ENCODE measurements at regions of chr1 and their contacts with region 1.

Region 1: DNA sequence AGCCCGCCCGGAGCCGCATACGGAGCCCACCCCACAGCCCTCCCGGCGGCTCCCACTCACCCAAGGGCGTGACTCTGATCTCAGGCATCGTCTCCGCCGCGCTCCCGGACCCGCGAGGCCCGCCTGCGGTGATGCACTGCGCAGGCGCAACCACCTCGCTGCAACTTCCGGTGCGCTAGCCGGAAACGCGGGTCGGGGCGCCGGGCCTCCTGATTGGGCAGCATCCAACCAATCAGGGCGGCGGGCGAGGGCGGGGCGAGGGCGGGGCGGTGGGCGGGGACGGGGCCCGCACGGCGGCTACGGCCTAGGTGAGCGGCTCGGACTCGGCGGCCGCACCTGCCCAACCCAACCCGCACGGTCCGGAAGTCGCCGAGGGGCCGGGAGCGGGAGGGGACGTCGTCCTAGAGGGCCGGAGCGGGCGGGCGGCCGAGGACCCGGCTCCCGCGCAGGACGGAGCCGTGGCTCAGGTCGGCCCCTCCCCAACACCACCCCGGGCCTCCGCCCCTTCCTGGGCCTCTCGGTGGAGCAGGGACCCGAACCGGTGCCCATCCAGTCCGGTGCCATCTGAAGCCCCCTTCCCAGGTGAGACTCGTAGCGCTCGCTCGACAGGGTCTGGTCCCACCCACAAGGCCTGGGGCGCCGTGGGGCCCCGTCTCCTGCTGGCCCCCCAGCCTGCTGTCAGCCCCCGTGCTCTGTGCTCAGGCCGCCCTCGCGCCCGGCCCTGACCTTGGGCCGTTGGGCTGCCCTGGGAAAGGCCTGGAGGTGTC is at the starts of genes CPTP and INTS11:
- DNase-seq: peak; percentile 90 to 95
- H3K4me3 ChIP-seq: peak within 1 kb of the TSS; percentile 71 to 98 (median 79)
- H3K27ac ChIP-seq: peak within 1 kb of the TSS; percentile 73 to 79 (median 76)
- H3K4me1 ChIP-seq: peaks cover 12 to 35% of the 10 kb centered on the region in 2 donors
- H3K27me3 ChIP-seq: no peaks in the 10 kb centered on the region
- CTCF ChIP-seq: no peak
- POLR2A ChIP-seq: peak in 1 of 2 donors; percentile 70
- total RNA-seq, gene CPTP: 16.7 to 37.3 (median 24.3) TPM
- total RNA-seq, gene INTS11: 68.9 to 116 (median 94.7) TPM

Region 2: DNA sequence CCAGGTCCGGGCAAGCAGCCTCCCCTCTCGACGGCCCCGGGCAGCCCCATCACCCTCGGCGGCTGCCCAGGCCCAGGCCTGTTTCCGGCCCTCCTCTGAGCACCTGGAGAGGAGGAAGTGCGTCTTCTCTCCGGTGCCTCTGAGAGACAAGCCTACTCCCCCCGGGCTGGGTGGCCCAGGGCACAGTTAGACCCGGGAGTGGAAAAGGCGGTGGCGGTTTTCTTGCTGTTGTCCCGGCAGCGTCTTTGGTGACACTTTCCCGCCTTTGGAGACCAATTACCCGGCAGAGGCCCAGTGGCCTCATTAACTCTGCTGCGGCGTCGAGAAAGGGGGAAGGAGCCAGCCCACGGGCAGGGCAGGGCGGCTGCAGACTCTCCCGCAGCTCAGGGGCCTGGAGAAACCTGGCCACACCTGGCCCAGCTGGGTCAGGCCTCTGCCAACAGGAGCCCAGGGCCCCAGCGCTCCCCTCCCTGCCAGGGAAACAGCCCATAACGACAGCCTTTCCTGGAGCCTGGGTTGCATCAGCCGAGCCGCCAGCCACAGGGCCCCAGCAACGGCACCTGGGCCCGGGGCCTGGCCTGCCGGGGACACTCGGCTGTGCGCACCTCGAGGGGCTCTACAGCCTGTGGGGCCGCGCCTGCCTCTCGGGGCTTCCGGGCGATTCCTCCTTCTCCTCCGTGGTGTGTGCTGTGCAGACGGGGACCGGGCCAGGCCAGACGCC is 180.4 kb before region 1 on chr1:
- intact Hi-C with region 1: no loop called
- DNase-seq: no peak
- H3K4me3 ChIP-seq: no peak overlapping the region
- H3K27ac ChIP-seq: no peak overlapping the region
- H3K4me1 ChIP-seq: no peaks in the 10 kb centered on the region
- H3K27me3 ChIP-seq: no peaks in the 10 kb centered on the region
- CTCF ChIP-seq: no peak
- POLR2A ChIP-seq: no peak

Region 3: DNA sequence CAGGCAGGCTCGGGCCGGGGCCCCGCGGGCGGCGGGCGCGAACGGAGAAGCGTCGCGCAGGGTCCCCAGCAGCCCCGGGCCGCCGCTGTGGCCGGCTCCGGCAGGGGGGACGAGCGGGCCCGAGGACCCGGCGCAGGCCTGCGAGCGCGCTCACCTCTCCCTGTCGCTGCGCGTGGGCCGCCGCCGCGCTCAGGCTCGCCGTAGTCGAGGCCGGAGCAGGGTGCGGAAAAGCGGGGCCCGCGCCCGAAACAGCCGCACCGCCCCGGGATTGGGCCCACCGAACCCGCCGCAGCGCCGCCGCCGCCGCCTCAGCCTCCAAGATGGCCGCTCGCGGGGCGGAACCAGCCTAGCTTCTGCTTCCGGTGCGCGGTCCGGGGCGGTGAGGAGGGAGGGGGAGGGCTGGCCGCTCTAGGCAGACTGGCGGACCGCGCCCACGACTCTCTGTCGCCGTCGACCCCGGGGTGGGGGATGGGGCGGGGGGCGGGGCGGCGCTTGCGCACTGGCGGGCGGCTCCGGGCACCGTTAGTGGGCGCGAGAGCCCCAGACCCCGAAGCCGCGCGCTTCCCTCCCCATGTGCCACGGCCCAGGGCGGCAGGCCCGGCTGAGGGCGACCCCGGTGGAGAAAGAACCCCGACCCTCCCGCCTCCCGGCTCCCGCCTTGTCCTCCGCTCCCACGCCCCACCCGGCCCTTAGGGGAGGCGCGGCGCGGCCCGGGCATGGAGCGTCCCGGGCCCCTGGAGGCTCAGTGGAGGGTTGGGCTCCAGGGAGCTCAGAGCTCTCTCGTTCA is 51.0 kb before region 1 on chr1 and contains the start of gene UBE2J2:
- intact Hi-C with region 1: loop called (anchors 10 kb)
- DNase-seq: peak; percentile 95
- H3K4me3 ChIP-seq: peak within 1 kb of the TSS; percentile 79 to 98 (median 85)
- H3K27ac ChIP-seq: peak within 1 kb of the TSS in 2 of 3 donors; percentile 45 to 47
- H3K4me1 ChIP-seq: peaks cover 29 to 34% of the 10 kb centered on the region in 2 donors
- H3K27me3 ChIP-seq: no peaks in the 10 kb centered on the region
- CTCF ChIP-seq: no peak
- POLR2A ChIP-seq: peak in 1 of 2 donors; percentile 74
- total RNA-seq, gene UBE2J2: 33.0 to 58.4 (median 36.2) TPM

Region 4: GRCh38 chr1:1347663-1348419 is 23.1 kb after region 1 on chr1:
- intact Hi-C with region 1: loop called (anchors 2 kb)
- DNase-seq: peak; percentile 68 to 70
- H3K4me3 ChIP-seq: peak overlapping the region in 2 of 3 donors; percentile 38 to 57
- H3K27ac ChIP-seq: peak overlapping the region; percentile 5 to 54 (median 51)
- H3K4me1 ChIP-seq: peaks cover 32 to 49% of the 10 kb centered on the region in 2 donors
- H3K27me3 ChIP-seq: no peaks in the 10 kb centered on the region
- CTCF ChIP-seq: no peak
- POLR2A ChIP-seq: peak in 1 of 2 donors; percentile 33